A549 (cell line): ENCODE measurements at regions of chr19 and their contacts with region 1.

Region 1: DNA sequence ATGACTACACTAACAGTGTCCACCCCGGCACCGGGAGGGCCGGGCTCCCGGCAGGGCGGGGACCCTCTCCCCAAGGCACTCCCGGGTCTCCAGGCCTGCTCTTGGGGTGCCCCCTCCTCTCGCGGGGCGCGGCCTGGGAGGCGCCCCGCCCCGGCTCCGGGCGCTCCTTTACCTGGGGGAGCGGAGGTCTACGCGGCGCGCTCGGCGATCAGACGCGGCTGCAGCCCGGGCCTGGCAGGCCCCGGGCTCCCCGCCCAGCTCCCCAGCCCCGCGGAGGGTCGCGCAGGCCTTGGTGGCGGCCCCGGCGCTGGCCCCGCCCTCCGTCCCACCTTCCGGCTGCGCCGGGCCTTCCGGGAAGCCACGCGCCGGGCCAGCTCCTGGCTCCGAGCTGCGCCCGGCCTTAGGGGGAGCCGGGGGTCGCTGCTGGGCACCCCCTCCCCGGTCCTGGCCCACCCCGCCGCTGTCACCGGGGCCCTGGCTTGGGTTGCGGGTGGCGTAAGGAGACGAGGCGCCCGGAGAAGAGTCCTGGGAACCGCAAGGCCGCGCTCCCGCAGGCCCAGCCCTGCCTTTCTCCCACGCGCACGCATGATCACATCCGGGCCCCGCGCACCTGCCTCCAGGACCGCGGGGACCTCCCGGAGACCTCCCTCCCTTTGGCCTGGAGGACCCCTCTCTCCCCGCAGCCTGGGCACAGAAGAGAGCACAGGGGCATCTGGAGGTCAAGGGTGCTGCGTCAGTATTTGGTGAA is at the start of gene C19orf12:
- DNase-seq: peak; percentile 63 to 77
- ATAC-seq: peak; percentile 83 to 86
- H3K4me3 ChIP-seq: peak within 1 kb of the TSS; percentile 82
- H3K27ac ChIP-seq: peak within 1 kb of the TSS; percentile 91 to 93
- H3K4me1 ChIP-seq: peaks cover 21% of the 10 kb centered on the region
- CTCF ChIP-seq: no peak
- EP300 ChIP-seq: no peak
- POLR2A ChIP-seq: peak; percentile 93
- RAD21 ChIP-seq: no peak
- polyA plus RNA-seq, gene C19orf12: 33.6 and 34.3 TPM in 2 replicates

Region 2: GRCh38 chr19:29603308-29603707 is 111.8 kb before region 1 on chr19:
- CTCF ChIA-PET with region 1: interaction called, 490 read pairs
- POLR2A ChIA-PET with region 1: interaction called, 110 read pairs
- DNase-seq: no peak
- ATAC-seq: no peak
- H3K4me3 ChIP-seq: no peak overlapping the region
- H3K27ac ChIP-seq: no peak overlapping the region
- H3K4me1 ChIP-seq: peaks cover 12% of the 10 kb centered on the region; the same call in 2 of the 3 replicates
- CTCF ChIP-seq: no peak
- EP300 ChIP-seq: no peak
- POLR2A ChIP-seq: no peak; the same call in 1 of the 2 replicates
- RAD21 ChIP-seq: no peak

Region 3: GRCh38 chr19:29671393-29672160 is 43.5 kb before region 1 on chr19:
- CTCF ChIA-PET with region 1: interaction called, 110 read pairs
- POLR2A ChIA-PET with region 1: interaction called, 4 read pairs
- DNase-seq: peak in 1 of 2 experiments; percentile 56
- ATAC-seq: peak in 1 of 2 experiments; percentile 49; a peak in 3 of 6 replicates
- H3K4me3 ChIP-seq: no peak overlapping the region
- H3K27ac ChIP-seq: no peak overlapping the region
- H3K4me1 ChIP-seq: peaks cover 6% of the 10 kb centered on the region; the same call in 1 of the 3 replicates
- CTCF ChIP-seq: no peak
- EP300 ChIP-seq: no peak
- POLR2A ChIP-seq: no peak
- RAD21 ChIP-seq: no peak

Region 4: DNA sequence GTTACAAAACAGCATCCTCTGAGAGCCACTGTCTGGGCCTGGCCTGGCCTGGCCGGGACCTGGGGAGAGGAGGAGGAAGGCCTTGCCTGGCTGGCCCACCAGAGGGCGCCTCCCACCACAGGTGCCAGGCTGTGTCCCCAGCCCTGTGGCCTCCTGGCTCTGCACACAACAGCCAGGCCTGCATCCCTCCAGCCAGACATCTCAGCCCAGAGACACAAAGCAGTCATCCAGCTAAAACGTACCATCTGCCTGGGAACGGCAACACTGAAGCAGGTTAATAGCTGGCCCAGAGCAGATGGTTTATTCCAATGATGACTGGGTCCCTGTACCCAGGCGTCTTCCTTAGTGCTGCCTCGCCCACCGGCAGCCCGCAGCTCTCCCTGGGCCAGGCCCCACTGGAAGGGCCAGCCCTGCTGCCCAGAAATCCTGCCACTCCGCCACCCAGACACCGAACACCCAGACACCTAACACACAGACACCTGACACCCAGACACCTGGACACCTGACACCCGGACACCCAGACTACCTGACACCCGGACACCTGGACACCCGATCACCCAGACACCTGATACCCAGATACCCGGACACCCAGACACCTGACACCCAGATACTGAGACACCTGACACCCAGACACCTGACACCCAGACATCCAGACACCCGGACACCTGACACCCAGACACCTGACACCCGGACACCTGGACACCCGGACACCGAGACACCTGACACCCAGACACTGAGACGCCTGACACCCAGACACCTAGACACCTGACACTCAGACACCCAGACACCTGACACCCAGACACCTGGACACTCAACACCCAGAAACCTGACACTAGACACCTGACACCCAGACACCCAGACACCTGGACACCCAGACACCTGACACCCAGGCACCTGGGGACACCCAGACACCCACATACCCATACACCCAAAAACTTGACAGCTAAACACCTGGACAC is 20.2 kb before region 1 on chr19:
- CTCF ChIA-PET with region 1: interaction called, 147 read pairs
- POLR2A ChIA-PET with region 1: interaction called, 3 read pairs
- DNase-seq: peak; percentile 84 to 85
- ATAC-seq: peak; percentile 96 to 99
- H3K4me3 ChIP-seq: no peak overlapping the region
- H3K27ac ChIP-seq: no peak overlapping the region
- H3K4me1 ChIP-seq: no peaks in the 10 kb centered on the region
- CTCF ChIP-seq: peak; percentile 81
- EP300 ChIP-seq: no peak
- POLR2A ChIP-seq: no peak
- RAD21 ChIP-seq: peak; percentile 58 to 68

Region 5: GRCh38 chr19:29753190-29753933 is 38.2 kb after region 1 on chr19:
- CTCF ChIA-PET with region 1: interaction called, 13 read pairs
- POLR2A ChIA-PET with region 1: interaction called, 3 read pairs
- DNase-seq: no peak
- ATAC-seq: peak; percentile 2 to 42; a peak in 3 of 6 replicates
- H3K4me3 ChIP-seq: no peak overlapping the region
- H3K27ac ChIP-seq: no peak overlapping the region
- H3K4me1 ChIP-seq: no peaks in the 10 kb centered on the region
- CTCF ChIP-seq: no peak
- EP300 ChIP-seq: no peak
- POLR2A ChIP-seq: no peak
- RAD21 ChIP-seq: no peak

Region 6: GRCh38 chr19:29873024-29873800 is 158.1 kb after region 1 on chr19:
- CTCF ChIA-PET with region 1: interaction called, 362 read pairs
- POLR2A ChIA-PET with region 1: no interaction called
- DNase-seq: peak; percentile 68 to 85
- ATAC-seq: peak; percentile 79 to 95
- H3K4me3 ChIP-seq: peak overlapping the region; percentile 70
- H3K27ac ChIP-seq: peak overlapping the region; percentile 74 to 84
- H3K4me1 ChIP-seq: peaks cover 9% of the 10 kb centered on the region
- CTCF ChIP-seq: peak; percentile 99
- EP300 ChIP-seq: no peak
- POLR2A ChIP-seq: no peak
- RAD21 ChIP-seq: peak; percentile 89 to 100